ENCODE measurements at regions of chr15 and their contacts with region 1.

Region 1: GRCh38 chr15:45414215-45414885 is 36.0 kb upstream of the GATM start:
- DNase-seq: no peak
- H3K4me3 ChIP-seq: no peak overlapping the region
- H3K27ac ChIP-seq: no peak overlapping the region
- H3K4me1 ChIP-seq: no peaks in the 10 kb centered on the region
- H3K27me3 ChIP-seq: no peaks in the 10 kb centered on the region
- CTCF ChIP-seq: no peak
- POLR2A ChIP-seq: no peak

Region 2: DNA sequence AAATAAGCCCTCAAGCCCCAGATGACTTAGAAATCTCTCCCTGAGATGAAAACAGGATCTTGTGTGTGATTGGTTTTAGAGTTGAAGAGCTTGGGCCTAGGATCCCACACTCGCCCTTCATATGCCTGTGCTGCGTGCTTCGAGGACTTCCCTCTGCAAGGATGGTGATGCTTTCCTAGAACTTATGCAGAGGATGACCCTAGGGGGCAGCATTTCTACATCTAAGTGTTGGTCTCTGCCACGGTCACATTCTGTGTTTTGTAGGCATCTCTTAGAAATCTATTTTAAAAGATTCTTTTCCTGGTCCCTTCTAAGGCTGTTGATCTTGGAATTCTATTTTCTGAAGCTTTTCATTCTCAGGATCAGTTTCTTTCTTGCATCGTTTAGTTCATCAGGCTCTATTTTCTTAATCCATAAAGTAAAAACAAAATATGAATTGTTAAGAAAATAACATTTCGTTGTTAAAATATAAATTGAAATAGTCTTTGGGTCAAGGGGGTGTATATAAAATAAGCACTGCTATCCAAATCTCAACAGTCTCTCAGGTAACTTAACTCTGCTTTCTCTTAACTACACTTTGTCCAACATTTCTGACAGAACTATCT is 1541.8 kb before region 1 on chr15:
- intact Hi-C with region 1: no loop called
- DNase-seq: no peak
- H3K4me3 ChIP-seq: no peak overlapping the region
- H3K27ac ChIP-seq: no peak overlapping the region
- H3K4me1 ChIP-seq: no peaks in the 10 kb centered on the region
- H3K27me3 ChIP-seq: no peaks in the 10 kb centered on the region
- CTCF ChIP-seq: peak in 1 of 3 donors; percentile 31
- POLR2A ChIP-seq: no peak

Region 3: GRCh38 chr15:45427085-45427484 is 12.7 kb after region 1 on chr15:
- intact Hi-C with region 1: loop called (anchors 1 kb)
- DNase-seq: no peak
- H3K4me3 ChIP-seq: no peak overlapping the region
- H3K27ac ChIP-seq: no peak overlapping the region
- H3K4me1 ChIP-seq: peaks cover 0 to 4% of the 10 kb centered on the region in 2 donors
- H3K27me3 ChIP-seq: no peaks in the 10 kb centered on the region
- CTCF ChIP-seq: no peak
- POLR2A ChIP-seq: no peak